WTC11 (cell line): ENCODE measurements at regions of chr10 and their contacts with region 1.

Region 1: GRCh38 chr10:124193309-124193696 is 99.9 kb upstream of the CHST15 start:
- DNase-seq: no peak
- ATAC-seq: no peak
- H3K4me3 Mint-ChIP-seq: no peak overlapping the region
- H3K27ac Mint-ChIP-seq: no peak overlapping the region
- H3K4me1 Mint-ChIP-seq: peaks cover 7% of the 10 kb centered on the region
- H3K27me3 Mint-ChIP-seq: peaks cover 5% of the 10 kb centered on the region
- CTCF ChIP-seq: no peak

Region 2: DNA sequence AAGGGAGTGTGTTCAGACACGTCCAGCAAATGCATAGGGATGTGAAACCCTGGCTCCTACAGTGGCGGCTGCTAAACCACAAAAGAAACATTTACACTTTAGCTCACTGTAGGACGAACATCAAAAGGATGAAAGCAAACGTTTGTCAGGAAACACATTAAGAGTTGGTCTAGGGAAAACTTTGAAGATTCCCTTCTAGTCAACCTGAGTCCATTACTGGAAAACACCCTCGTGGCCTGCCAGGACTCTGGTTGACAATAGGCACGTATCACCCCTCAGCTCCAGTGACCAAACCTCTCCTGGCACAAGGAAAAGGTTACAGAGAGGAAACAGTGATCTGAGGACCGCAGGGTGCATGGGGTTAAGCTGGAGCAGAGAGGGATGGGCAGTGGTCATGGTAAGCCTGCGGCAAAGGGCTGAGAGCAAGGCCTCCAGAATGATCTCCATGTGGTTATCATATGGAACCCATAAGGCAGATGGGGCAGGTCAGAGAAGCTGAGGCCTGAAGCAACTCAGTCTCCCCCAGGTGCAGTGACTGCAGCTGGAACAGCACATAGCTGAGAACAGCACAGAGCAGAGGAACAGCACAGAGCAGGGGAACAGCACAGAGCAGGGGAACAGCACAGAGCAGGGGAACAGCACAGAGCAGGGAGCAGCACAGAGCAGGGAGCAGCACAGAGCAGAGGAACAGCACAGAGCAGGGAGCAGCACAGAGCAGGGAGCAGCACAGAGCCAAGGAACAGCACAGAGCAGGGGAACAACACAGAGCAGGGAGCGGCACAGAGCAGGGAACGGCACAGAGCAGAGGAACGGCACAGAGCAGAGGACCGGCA is 149.8 kb before region 1 on chr10:
- CTCF ChIA-PET with region 1: no interaction called
- POLR2A ChIA-PET with region 1: no interaction called
- DNase-seq: no peak
- ATAC-seq: no peak
- H3K4me3 Mint-ChIP-seq: no peak overlapping the region
- H3K27ac Mint-ChIP-seq: no peak overlapping the region
- H3K4me1 Mint-ChIP-seq: peaks cover 21% of the 10 kb centered on the region
- H3K27me3 Mint-ChIP-seq: no peaks in the 10 kb centered on the region; the same call in 1 of the 2 replicates
- CTCF ChIP-seq: no peak

Region 3: DNA sequence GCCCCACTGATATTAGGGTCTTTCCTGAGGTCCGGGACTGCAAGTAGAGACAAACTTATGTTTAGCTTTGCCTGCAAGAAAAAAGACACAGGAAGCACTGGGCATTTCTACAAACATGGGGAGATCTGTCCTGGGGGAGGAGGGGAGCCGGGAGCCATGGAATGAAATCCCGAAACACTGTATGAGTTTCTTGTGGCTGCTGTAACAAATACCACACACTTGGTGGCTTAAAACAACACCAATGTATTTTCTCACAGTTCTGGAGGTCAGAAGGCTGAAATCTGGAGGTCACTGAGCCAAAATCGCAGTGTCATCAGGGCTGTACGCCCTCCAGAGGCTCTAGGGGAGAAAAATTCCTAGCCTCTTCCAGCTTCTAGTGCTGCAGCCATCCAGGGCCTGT is 14.1 kb after region 1 on chr10:
- CTCF ChIA-PET with region 1: interaction called, 10 read pairs
- POLR2A ChIA-PET with region 1: no interaction called
- DNase-seq: no peak
- ATAC-seq: no peak
- H3K4me3 Mint-ChIP-seq: no peak overlapping the region
- H3K27ac Mint-ChIP-seq: no peak overlapping the region
- H3K4me1 Mint-ChIP-seq: no peaks in the 10 kb centered on the region
- H3K27me3 Mint-ChIP-seq: no peaks in the 10 kb centered on the region; the same call in none of the 2 replicates
- CTCF ChIP-seq: no peak

Region 4: DNA sequence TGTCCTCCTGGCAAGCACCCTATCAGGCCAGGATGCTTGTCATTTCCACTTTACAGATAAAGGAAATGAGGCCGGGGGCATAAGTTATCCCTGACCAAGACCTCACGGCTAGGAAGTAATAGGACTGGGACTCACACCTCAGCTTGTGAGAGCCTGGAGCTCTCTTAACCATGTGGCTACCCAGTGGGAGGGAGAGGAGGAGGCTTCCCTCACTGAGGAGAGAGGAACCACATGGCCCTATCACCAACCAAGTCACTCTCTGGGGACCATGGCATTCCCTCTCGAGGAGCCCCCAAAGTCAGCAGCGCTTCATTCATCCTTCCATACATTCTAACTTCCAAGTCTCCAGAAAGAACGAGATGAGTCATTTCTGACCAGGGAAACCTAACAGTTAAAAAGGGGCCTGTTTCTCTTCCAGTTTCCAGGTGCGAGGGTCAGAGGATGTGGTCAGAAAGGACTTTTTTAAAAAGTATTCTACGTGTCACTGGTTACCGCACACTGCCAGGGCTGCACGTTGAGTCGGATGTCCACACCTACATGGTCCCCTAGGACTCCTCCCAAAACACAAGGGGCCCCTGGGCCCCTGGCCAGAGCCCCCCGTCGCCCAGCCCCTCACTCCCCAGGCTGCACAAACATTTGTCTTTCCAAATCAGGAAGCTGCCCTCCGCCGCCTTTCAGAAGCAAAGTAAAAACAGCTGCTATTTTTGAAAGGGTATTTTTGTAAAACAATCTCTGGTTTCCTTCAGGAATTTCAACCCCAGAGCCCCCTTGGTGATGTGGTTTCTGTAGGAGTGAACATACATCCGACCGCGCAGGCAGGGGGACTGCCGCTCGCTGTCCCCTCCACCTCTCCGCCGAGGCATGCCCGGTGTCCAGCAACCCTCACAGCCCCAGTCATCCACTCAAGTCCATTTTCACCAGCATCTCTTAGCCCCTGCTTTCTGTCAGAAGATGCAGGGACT is 28.3 kb after region 1 on chr10:
- CTCF ChIA-PET with region 1: interaction called, 13 read pairs
- POLR2A ChIA-PET with region 1: no interaction called
- DNase-seq: no peak
- ATAC-seq: no peak
- H3K4me3 Mint-ChIP-seq: no peak overlapping the region
- H3K27ac Mint-ChIP-seq: no peak overlapping the region
- H3K4me1 Mint-ChIP-seq: peaks cover 13% of the 10 kb centered on the region
- H3K27me3 Mint-ChIP-seq: no peaks in the 10 kb centered on the region; the same call in 1 of the 2 replicates
- CTCF ChIP-seq: no peak

Region 5: GRCh38 chr10:124436191-124436638 is 242.9 kb after region 1 on chr10:
- CTCF ChIA-PET with region 1: no interaction called
- POLR2A ChIA-PET with region 1: no interaction called
- DNase-seq: no peak
- ATAC-seq: no peak
- H3K4me3 Mint-ChIP-seq: no peak overlapping the region
- H3K27ac Mint-ChIP-seq: no peak overlapping the region
- H3K4me1 Mint-ChIP-seq: peaks cover 2% of the 10 kb centered on the region; the same call in 1 of the 2 replicates
- H3K27me3 Mint-ChIP-seq: no peaks in the 10 kb centered on the region
- CTCF ChIP-seq: no peak